Activated CD4-positive, alpha-beta T cell treated with anti-CD3 and anti-CD28 coated beads, Interleukin-2, amount 10 ng/mL, durations not matched to agents 24 days and 14 days (primary cell): ENCODE measurements at regions of chr20 and their contacts with region 1.

Region 1: GRCh38 chr20:63272584-63273579 is at the start of gene ARFGAP1:
- DNase-seq: peak; percentile 97
- H3K4me3 Mint-ChIP-seq: peak within 1 kb of the TSS; percentile 93
- H3K27ac Mint-ChIP-seq: peak within 1 kb of the TSS; percentile 89
- H3K4me1 Mint-ChIP-seq: peaks cover 19% of the 10 kb centered on the region
- H3K27me3 Mint-ChIP-seq: peaks cover 8% of the 10 kb centered on the region
- total RNA-seq, gene ARFGAP1: 97.0 and 98.2 TPM in 2 replicates

Region 2: GRCh38 chr20:63216041-63216848 is 56.6 kb before region 1 on chr20 and contains the start of gene YTHDF1:
- intact Hi-C with region 1: loop called (anchors 1 kb)
- DNase-seq: peak; percentile 99
- H3K4me3 Mint-ChIP-seq: peak within 1 kb of the TSS; percentile 99
- H3K27ac Mint-ChIP-seq: peak within 1 kb of the TSS; percentile 96
- H3K4me1 Mint-ChIP-seq: peaks cover 31% of the 10 kb centered on the region
- H3K27me3 Mint-ChIP-seq: peaks cover 2% of the 10 kb centered on the region
- total RNA-seq, gene YTHDF1: 44.5 and 48.6 TPM in 2 replicates

Region 3: GRCh38 chr20:63955827-63956663 is 683.2 kb after region 1 on chr20 and contains the start of gene UCKL1:
- intact Hi-C with region 1: loop called (anchors 5 kb)
- DNase-seq: peak; percentile 97
- H3K4me3 Mint-ChIP-seq: peak within 1 kb of the TSS; percentile 85
- H3K27ac Mint-ChIP-seq: peak within 1 kb of the TSS; percentile 88
- H3K4me1 Mint-ChIP-seq: peaks cover 28% of the 10 kb centered on the region
- H3K27me3 Mint-ChIP-seq: no peaks in the 10 kb centered on the region
- total RNA-seq, gene UCKL1: 48.1 and 49.5 TPM in 2 replicates